ENCODE measurements at regions of chr11 and their contacts with region 1.

Region 1: DNA sequence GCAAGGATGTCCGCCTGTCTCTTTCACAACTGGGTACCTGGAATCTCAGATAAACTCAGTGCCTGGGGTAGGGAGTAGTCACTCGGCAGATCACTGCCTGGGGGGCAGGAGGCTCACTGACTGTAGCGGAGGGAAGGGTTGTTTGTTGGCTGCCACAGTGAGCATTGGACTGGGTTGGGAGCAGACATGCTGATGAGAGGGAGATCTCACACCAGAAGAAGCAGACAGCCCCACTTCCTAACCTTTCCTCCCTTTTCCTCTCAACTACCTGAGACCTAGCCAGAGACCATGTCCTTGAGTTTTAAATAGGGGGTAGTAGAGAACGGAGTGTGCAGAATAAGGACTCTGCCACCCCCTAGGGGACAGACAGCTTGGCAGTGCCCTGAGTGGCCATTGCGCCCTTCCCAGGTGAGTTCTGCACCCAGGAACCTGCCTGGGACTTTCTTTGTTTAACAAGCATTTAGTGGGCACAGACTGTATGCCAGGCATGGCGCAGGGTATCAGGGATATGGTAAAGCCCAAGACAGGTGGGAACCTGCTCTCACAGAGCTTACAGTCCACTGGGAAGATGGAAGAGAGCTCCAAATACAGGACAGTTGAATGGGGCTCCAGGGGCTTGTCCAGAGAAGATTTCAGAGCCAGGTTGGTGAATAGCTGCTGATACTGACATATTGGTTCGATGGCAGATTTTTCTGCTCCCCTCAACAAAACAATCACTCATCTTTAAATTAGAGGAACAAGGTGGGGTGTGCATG is 115.7 kb upstream of the NNMT start:
- DNase-seq: no peak

Region 2: DNA sequence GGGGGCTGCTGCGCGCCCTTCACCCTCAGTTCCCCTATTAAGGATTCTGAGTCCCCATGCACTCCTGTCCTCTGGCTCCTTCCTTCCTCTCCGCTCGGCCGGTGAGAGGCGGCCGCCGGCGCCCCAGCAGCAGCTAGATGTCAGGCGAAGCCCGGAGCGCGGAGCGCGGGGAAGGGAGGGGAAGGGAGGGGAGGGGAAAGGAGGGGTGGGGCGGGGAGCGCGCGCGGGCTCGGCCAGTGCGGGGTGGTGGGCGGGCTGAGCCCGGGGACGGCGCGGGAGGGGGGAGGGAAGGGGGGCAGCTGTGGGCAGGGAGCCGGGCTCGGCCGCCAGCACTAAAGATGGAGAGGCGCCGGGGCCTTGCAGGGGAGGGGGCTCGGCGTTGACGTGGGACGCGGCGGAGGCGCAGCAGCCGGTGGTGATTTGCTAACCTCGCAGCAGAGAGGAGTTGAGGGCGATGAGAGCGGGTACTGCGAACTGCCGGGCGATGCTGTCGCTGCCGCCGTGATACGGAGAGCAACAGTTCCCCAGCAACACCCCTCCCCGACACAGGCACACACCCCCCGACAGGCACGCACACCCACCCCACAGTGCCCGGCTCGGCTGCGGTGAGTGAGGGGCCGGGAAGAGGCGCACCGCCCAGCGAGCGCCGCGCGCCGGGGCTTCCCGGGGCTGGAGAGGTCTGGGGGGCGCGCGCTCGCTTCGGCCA is 121.0 kb before region 1 on chr11 and contains the start of gene ZBTB16:
- intact Hi-C with region 1: loop called (anchors 2 kb)
- DNase-seq: peak; percentile 93
- total RNA-seq, gene ZBTB16: 25.4 TPM

Region 3: GRCh38 chr11:114075891-114076441 is 104.5 kb before region 1 on chr11:
- intact Hi-C with region 1: no loop called
- DNase-seq: peak; percentile 75

Region 4: GRCh38 chr11:114257621-114258558 is 77.4 kb after region 1 on chr11:
- intact Hi-C with region 1: loop called (anchors 5 kb)
- DNase-seq: peak; percentile 76

Measured in cardiac septum (tissue), 1 donor.